ENCODE measurements at regions of chr16 and their contacts with region 1.

Region 1: GRCh38 chr16:66357153-66357928 is 9.2 kb upstream of the CDH5 start:
- DNase-seq: peak; percentile 46
- ATAC-seq: peak; percentile 39
- H3K4me3 Mint-ChIP-seq: no peak overlapping the region
- H3K27ac Mint-ChIP-seq: no peak overlapping the region
- H3K4me1 Mint-ChIP-seq: peaks cover 8% of the 10 kb centered on the region
- H3K27me3 Mint-ChIP-seq: peaks cover 58% of the 10 kb centered on the region

Region 2: GRCh38 chr16:66344533-66345145 is 12.7 kb before region 1 on chr16:
- CTCF ChIA-PET with region 1: interaction called, 15 read pairs
- DNase-seq: no peak
- ATAC-seq: no peak
- H3K4me3 Mint-ChIP-seq: no peak overlapping the region
- H3K27ac Mint-ChIP-seq: no peak overlapping the region
- H3K4me1 Mint-ChIP-seq: no peaks in the 10 kb centered on the region
- H3K27me3 Mint-ChIP-seq: peaks cover 19% of the 10 kb centered on the region

Region 3: DNA sequence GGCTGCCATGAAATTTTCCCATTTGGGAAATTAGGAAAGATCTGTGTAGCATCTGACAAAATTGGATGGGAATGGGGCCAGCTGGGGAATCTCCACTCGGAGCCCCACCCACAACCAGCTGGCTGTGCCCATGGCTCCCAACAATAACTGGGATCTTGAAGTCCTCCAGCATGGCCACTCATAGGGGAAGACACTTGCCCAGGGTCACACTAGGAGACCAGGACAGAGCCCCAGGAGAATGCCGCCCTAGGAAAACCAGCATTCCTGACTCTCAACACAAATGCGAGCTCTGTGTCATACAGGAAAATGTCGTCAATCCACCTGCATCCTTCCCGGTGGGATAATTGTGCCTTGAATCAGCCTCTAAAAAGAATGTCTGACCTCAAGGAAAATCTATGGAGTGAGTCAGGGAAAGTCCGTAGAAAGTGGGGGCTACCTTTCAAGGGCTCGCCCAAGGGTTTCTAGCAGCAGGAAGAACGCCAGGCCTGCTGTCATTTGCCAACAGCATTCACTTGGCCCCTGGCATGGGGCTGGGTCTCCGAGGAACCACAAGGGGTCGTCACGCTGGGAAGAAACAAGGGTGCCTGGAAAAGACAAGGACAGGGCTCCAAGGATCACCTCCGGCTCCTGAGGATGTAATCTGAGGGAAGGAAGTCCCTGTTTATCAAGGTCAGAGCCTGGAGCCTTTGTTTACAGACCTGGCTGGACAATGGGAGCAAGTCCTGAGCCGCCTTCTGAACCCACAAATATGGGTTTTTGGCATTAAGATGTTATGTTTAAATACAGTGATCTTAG is 25.0 kb after region 1 on chr16:
- CTCF ChIA-PET with region 1: no interaction called
- DNase-seq: no peak
- ATAC-seq: no peak
- H3K4me3 Mint-ChIP-seq: no peak overlapping the region
- H3K27ac Mint-ChIP-seq: no peak overlapping the region
- H3K4me1 Mint-ChIP-seq: no peaks in the 10 kb centered on the region
- H3K27me3 Mint-ChIP-seq: no peaks in the 10 kb centered on the region

Region 4: GRCh38 chr16:66483689-66484481 is 126.5 kb after region 1 on chr16:
- CTCF ChIA-PET with region 1: interaction called, 10 read pairs
- DNase-seq: peak; percentile 86
- ATAC-seq: peak; percentile 85
- H3K4me3 Mint-ChIP-seq: no peak overlapping the region
- H3K27ac Mint-ChIP-seq: no peak overlapping the region
- H3K4me1 Mint-ChIP-seq: peaks cover 29% of the 10 kb centered on the region
- H3K27me3 Mint-ChIP-seq: no peaks in the 10 kb centered on the region